Heart right ventricle (tissue), 16 donors: ENCODE measurements at regions of chr6 and their contacts with region 1.

Region 1: DNA sequence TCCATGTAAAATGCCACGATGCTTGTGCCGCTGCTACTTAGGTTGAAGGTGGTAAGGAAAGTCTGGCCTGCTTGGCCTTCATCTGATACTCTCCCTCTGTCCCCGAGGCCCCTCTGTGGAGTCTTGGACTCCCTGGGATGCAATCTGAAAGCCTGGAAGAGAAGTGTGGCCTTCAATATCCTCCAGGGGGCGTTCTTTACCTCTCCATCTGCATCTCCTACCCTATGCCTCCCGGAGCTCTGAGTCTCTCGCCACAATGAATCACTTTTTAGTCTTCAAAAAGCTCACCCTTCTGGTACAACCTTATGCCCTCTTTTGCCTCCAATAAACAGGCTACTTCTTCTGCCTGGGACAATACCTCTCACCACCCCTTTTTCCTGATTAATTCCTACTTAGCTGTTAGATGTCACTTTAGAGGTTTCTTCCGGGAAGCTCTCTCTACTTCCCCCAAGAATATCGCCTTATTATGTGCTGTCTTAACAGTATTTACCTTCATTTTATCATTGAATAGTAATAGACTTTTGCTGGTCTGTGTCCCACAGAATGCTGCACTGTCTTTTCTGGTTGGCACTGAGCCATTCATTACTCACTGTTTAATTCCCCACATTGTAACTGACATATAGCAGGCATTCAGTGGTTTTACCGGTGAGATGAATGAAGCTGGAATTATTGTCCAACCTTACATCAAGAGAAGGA is 13.9 kb upstream of the ATG5 start:
- DNase-seq: peak in 1 of 2 donors; percentile 20
- ATAC-seq: peak in 6 of 8 donors; percentile 67 to 86 (median 78)
- H3K4me3 ChIP-seq: no peak overlapping the region
- H3K27ac ChIP-seq: no peak overlapping the region
- H3K4me1 ChIP-seq: peaks cover 0 to 5% (median 0%) of the 10 kb centered on the region in 9 donors
- H3K27me3 ChIP-seq: peaks cover 0 to 3% (median 0%) of the 10 kb centered on the region in 7 donors
- CTCF ChIP-seq: peak; percentile 41 to 83 (median 70)

Region 2: GRCh38 chr6:106556368-106556960 is 217.0 kb after region 1 on chr6:
- intact Hi-C with region 1: loop called in 2 of 10 experiments (anchors 5 to 10 kb)
- DNase-seq: no peak
- ATAC-seq: no peak
- H3K4me3 ChIP-seq: no peak overlapping the region
- H3K27ac ChIP-seq: no peak overlapping the region
- H3K4me1 ChIP-seq: peaks cover 0 to 14% (median 0%) of the 10 kb centered on the region in 9 donors
- H3K27me3 ChIP-seq: no peaks in the 10 kb centered on the region
- CTCF ChIP-seq: peak in 6 of 9 donors; percentile 34 to 65 (median 47)

Region 3: GRCh38 chr6:106568530-106568929 is 229.0 kb after region 1 on chr6:
- intact Hi-C with region 1: loop called in 7 of 10 experiments (anchors 5 to 10 kb)
- DNase-seq: no peak
- ATAC-seq: no peak
- H3K4me3 ChIP-seq: no peak overlapping the region
- H3K27ac ChIP-seq: no peak overlapping the region
- H3K4me1 ChIP-seq: peaks cover 0 to 9% (median 0%) of the 10 kb centered on the region in 9 donors
- H3K27me3 ChIP-seq: no peaks in the 10 kb centered on the region
- CTCF ChIP-seq: no peak

Region 4: DNA sequence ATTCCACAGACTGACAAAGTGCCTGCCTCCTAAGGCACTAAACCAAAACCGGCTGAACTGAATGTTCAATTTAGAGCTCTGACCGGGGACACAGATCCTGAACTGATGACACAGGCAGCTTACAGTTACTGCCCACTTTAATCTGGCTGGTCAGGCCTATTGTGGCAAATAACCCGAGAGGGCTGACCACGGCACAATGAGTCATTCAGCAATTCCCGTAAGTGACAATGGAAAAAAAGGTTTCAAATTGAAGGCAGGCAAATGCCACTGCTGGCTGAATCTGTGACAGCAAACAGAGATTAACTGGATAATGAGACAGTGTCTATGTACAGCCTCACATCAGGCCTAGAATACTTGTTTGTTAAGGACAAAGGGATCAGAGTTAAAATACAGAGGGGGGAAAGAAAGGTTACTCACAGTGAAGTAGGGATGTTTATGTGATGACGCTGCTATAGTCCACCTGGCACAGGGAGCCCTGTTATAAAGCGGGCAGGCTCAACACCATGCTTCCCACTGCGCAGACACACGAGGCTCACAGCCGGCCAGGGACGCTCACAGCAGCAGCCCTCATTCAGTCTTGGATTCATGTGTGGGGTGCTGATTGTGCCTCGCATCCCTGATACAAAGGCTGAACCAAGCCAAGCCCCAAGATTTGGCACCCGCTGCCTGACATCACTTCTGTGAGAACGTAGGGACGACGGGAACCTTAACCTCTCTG is 235.4 kb after region 1 on chr6:
- intact Hi-C with region 1: loop called in 1 of 10 experiments (anchors 10 kb)
- DNase-seq: no peak
- ATAC-seq: no peak
- H3K4me3 ChIP-seq: no peak overlapping the region
- H3K27ac ChIP-seq: peak overlapping the region in 1 of 10 donors; percentile 50
- H3K4me1 ChIP-seq: peaks cover 0 to 22% (median 0%) of the 10 kb centered on the region in 9 donors
- H3K27me3 ChIP-seq: no peaks in the 10 kb centered on the region
- CTCF ChIP-seq: no peak

Region 5: DNA sequence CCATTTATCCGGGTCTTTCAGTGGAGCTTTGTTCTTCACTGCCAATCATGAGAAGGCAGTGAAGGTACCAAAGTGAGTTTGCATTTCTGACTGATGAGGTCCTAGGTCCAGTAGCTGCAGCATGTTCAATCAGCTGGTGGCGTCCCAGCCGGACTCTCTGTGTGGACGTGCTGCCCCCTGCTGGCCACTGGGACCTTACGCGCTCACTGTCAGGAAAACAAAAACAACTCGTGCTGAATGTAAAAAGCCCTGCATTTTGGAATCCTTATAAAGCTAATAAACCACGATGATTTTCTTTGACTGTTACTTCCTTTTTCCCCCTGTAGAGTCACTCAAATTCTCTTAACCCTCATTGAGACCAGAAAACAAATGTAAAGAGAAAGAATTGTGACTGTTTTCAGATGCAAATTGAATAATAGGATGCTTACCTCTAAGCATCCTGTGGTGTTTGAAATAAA is 640.0 kb after region 1 on chr6:
- intact Hi-C with region 1: loop called in 7 of 10 experiments (anchors 5 to 10 kb)
- DNase-seq: peak; percentile 79 to 83
- ATAC-seq: peak; percentile 49 to 88 (median 76)
- H3K4me3 ChIP-seq: no peak overlapping the region
- H3K27ac ChIP-seq: no peak overlapping the region
- H3K4me1 ChIP-seq: peaks cover 2 to 11% (median 6%) of the 10 kb centered on the region in 9 donors
- H3K27me3 ChIP-seq: peaks cover 14 to 93% (median 75%) of the 10 kb centered on the region in 7 donors
- CTCF ChIP-seq: peak; percentile 86 to 96 (median 94)